ENCODE measurements at regions of chr3 and their contacts with region 1.

Region 1: DNA sequence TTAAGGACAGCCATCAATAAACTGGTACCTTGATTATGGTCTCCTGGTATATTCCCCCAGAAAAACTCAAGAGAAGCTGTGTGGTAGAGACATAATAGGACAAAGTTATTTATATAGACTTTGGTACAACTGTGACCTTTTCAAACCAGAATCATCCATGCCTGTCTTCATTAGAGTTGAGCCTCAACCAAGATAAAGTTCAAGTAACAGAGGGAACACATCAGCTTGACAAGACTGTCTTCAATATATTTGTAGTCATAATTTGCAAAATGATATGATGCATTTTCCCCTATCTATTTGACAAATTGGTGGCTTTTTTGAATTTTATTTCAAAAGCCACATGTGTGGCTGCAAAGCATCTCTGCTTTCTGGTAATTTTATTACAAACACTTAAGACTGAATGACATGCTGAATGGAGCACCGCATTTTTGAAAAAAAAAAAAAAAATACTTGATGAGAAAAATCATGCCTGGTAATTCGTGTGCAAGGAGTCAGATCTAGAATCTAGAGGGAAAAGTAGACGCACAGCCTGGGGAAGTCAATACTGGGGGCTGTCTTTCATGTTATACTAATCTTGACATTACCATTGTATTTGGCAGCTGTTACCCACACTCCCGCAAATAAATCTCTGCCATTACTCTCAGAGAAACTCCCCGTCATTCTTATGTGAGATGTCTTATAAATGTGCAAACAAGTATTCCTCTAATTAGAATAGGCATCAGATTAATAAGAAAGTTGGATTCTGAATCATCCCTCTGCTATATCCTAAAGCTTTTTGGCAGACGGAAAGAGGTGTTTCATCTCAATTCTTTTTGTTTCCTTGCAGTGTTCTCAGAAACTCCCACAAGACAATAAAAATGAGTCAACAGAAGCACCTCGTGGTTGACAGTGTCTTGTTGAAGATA is 554.8 kb upstream of the CBLB start:
- DNase-seq: no peak
- H3K4me3 Mint-ChIP-seq: peak overlapping the region; percentile 20
- H3K27ac Mint-ChIP-seq: peak overlapping the region; percentile 78
- H3K4me1 Mint-ChIP-seq: peaks cover 47% of the 10 kb centered on the region
- H3K27me3 Mint-ChIP-seq: no peaks in the 10 kb centered on the region

Region 2: DNA sequence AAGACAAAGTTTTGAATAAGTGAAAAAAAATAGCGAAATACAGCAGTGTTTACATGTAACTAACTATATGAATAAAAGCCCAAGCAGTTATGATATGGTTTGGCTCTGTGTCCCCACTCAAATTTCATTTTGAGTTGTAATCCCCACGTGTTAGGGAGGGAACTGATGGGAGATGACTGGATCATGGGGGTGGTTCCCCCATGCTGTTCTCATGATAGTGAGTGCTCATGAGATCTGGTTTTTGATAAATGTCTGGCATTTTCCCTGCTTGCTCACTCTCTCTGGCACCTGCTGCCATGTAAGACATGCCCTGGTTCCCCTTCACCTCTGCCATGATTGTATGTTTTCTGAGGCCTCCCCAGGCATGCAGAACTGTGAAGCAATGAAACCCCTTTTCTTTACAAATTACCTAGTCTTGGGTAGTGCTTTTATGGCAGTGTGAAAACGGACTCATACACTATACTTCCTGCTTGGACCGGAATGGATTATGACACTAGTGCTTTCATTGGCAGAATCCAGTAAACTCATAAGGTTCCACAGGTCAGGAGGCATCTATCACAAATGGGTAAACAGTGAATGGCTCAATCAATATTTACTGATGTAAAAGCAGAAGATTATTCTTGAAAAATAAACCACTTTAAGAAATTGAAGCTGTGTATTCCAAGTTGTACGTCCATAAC is 746.8 kb before region 1 on chr3:
- intact Hi-C with region 1: loop called (anchors 1 kb)
- DNase-seq: no peak
- H3K4me3 Mint-ChIP-seq: no peak overlapping the region
- H3K27ac Mint-ChIP-seq: peak overlapping the region; percentile 74
- H3K4me1 Mint-ChIP-seq: peaks cover 23% of the 10 kb centered on the region
- H3K27me3 Mint-ChIP-seq: no peaks in the 10 kb centered on the region

Region 3: GRCh38 chr3:106326941-106327695 is 96.5 kb before region 1 on chr3:
- intact Hi-C with region 1: no loop called
- DNase-seq: no peak
- H3K4me3 Mint-ChIP-seq: no peak overlapping the region
- H3K27ac Mint-ChIP-seq: peak overlapping the region; percentile 14
- H3K4me1 Mint-ChIP-seq: peaks cover 32% of the 10 kb centered on the region
- H3K27me3 Mint-ChIP-seq: no peaks in the 10 kb centered on the region

Region 4: DNA sequence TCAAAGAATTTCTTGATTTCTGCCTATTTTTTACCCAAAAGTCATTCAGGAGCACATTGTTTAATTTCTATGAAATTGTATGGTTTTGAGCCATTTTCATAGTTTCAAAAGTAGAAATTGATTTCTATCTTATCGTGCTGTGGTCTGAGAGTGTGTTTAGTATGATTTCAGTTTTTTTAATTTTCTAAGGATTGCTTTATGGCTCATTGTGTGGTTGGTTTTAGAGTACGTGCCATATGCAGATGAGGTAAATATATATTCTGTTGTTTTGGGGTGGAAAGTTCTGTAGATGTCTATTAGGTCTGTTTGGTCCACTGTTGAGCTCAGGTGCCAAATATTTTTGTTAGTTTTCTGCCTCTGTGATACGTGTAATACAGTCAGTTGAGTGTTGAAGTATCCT is 67.7 kb before region 1 on chr3:
- intact Hi-C with region 1: loop called (anchors 1 kb)
- DNase-seq: no peak
- H3K4me3 Mint-ChIP-seq: no peak overlapping the region
- H3K27ac Mint-ChIP-seq: peak overlapping the region; percentile 29
- H3K4me1 Mint-ChIP-seq: peaks cover 19% of the 10 kb centered on the region
- H3K27me3 Mint-ChIP-seq: no peaks in the 10 kb centered on the region

Region 5: GRCh38 chr3:106401666-106402490 is 21.7 kb before region 1 on chr3:
- intact Hi-C with region 1: no loop called
- DNase-seq: no peak
- H3K4me3 Mint-ChIP-seq: no peak overlapping the region
- H3K27ac Mint-ChIP-seq: no peak overlapping the region
- H3K4me1 Mint-ChIP-seq: peaks cover 5% of the 10 kb centered on the region
- H3K27me3 Mint-ChIP-seq: no peaks in the 10 kb centered on the region

Measured in activated T-helper 2 cell treated with anti-CD3 and anti-CD28 coated beads, Interferon-gamma antibody, Interleukin-2, Interleukin-4, amounts not matched to agents 10 μg/mL and 5 μg/mL and 100 μg/mL, durations not matched to agents 14 hours and 24 hours and 36 hours (primary cell).